Breast epithelium (tissue), 4 donors: ENCODE measurements at regions of chr1 and their contacts with region 1.

Region 1: GRCh38 chr1:64082459-64082858 is 121.0 kb upstream of the UBE2U start:
- DNase-seq: no peak
- H3K4me3 ChIP-seq: no peak overlapping the region
- H3K27ac ChIP-seq: no peak overlapping the region
- H3K4me1 ChIP-seq: no peaks in the 10 kb centered on the region
- H3K27me3 ChIP-seq: no peaks in the 10 kb centered on the region
- CTCF ChIP-seq: no peak
- POLR2A ChIP-seq: no peak

Region 2: GRCh38 chr1:62318756-62319544 is 1763.5 kb before region 1 on chr1 and contains the start of gene KANK4:
- intact Hi-C with region 1: loop called (anchors 10 kb)
- DNase-seq: no peak
- H3K4me3 ChIP-seq: peak within 1 kb of the TSS; percentile 21 to 67 (median 61)
- H3K27ac ChIP-seq: no peak within 1 kb of the TSS
- H3K4me1 ChIP-seq: no peaks in the 10 kb centered on the region
- H3K27me3 ChIP-seq: peaks cover 0 to 16% of the 10 kb centered on the region in 2 donors
- CTCF ChIP-seq: no peak
- POLR2A ChIP-seq: no peak
- total RNA-seq, gene KANK4: 0.48 to 1.6 (median 0.66) TPM

Region 3: DNA sequence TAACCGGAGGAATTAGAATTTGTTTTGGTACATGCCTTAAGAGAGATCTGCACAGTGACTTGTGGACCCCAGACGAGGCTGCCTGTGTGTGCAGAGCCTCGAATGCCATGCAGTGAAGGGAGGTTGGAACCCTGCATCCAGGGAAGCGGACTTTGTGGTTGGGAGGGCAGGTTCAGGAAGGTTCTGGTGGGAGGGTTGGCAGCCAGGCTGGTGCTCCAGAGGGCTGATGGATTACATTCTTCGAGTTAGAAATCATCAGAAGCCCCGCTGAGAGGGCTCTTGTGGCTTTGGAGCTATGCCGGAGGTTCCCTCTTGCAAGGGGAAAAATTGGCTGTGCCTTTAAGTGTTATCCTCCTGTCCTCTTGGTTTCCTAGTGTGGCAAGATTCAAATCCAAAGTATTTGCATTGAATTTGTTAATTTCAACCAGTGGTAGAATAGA is 287.5 kb before region 1 on chr1:
- intact Hi-C with region 1: no loop called
- DNase-seq: no peak
- H3K4me3 ChIP-seq: no peak overlapping the region
- H3K27ac ChIP-seq: no peak overlapping the region
- H3K4me1 ChIP-seq: no peaks in the 10 kb centered on the region
- H3K27me3 ChIP-seq: no peaks in the 10 kb centered on the region
- CTCF ChIP-seq: no peak
- POLR2A ChIP-seq: no peak